ENCODE measurements at regions of chr2 and their contacts with region 1.

Region 1: DNA sequence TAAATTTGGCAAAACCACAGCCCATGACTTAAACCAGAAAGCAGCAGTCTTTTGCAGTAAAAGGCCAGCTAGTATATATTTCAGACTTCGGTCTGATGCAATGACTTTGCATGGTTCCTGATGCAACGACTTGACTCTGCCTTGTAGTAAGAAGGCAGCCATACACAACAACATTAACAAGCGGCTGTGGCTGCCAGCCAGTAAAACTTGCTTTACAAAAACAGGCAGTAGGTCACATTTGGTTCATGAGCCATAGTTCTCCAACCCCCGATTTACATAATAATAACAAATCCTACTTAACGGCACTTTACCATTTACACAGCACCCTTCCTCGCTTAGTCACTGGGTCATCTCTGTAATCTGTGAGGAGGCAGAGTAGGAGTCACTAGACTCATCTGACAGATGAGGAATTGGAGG is 410.3 kb downstream of the LRATD1 start:
- DNase-seq: no peak
- H3K4me3 ChIP-seq: no peak overlapping the region
- H3K27ac ChIP-seq: no peak overlapping the region
- H3K4me1 ChIP-seq: peaks cover 0 to 5% of the 10 kb centered on the region in 2 experiments; a peak in 1 of 4 replicates
- H3K27me3 ChIP-seq: no peaks in the 10 kb centered on the region
- CTCF ChIP-seq: no peak
- EP300 ChIP-seq: no peak
- RAD21 ChIP-seq: no peak

Region 2: GRCh38 chr2:15058015-15058720 is 15.4 kb after region 1 on chr2:
- CTCF ChIA-PET with region 1: interaction called, 19 read pairs
- POLR2A ChIA-PET with region 1: no interaction called
- DNase-seq: no peak
- H3K4me3 ChIP-seq: no peak overlapping the region
- H3K27ac ChIP-seq: no peak overlapping the region
- H3K4me1 ChIP-seq: peaks cover 0 to 16% of the 10 kb centered on the region in 2 experiments; a peak in 2 of 4 replicates
- H3K27me3 ChIP-seq: no peaks in the 10 kb centered on the region
- CTCF ChIP-seq: peak; percentile 36
- EP300 ChIP-seq: no peak
- RAD21 ChIP-seq: peak; percentile 38; the same call in 1 of the 2 replicates